Activated B cell treated with CpG ODN at 0.5 μM for 24 hours (primary cell): ENCODE measurements at regions of chr5 and their contacts with region 1.

Region 1: DNA sequence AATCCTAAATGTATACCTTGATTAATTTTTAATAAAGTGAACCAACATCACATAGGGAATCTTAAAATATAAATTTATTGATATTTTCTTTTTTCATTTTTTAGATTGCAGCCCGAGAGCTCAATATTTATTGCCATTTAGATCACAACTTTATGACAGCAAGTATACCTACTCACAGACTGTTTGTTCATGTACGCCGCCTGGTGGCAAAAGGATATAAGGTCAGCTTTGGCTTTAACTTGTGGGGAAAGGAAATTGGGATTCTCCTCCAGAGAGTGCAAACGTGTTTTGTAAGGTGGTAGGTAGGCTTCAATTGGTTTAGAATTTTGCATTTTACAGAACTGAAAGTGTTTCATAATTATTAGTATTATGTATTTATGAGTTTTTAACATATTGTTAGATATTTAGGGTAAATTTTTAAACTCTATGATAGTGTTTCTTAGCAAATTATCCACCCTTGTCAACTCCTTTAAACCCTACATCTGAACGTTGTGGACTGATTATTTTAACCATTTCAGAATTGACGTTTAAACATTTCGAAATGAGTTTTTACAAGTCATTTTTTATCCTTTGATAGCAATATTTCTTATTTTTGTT is 17.5 kb upstream of the DHFR start:
- DNase-seq: no peak
- ATAC-seq: no peak
- H3K4me3 Mint-ChIP-seq: no peak overlapping the region
- H3K27ac Mint-ChIP-seq: no peak overlapping the region
- H3K4me1 Mint-ChIP-seq: peaks cover 19% of the 10 kb centered on the region
- H3K27me3 Mint-ChIP-seq: no peaks in the 10 kb centered on the region
- CTCF ChIP-seq: peak; percentile 61

Region 2: GRCh38 chr5:80093796-80094195 is 578.4 kb before region 1 on chr5:
- CTCF ChIA-PET with region 1: interaction called, 11 read pairs
- POLR2A ChIA-PET with region 1: no interaction called
- intact Hi-C with region 1: loop called (anchors 1 kb)
- DNase-seq: no peak
- ATAC-seq: no peak
- H3K4me3 Mint-ChIP-seq: no peak overlapping the region
- H3K27ac Mint-ChIP-seq: no peak overlapping the region
- H3K4me1 Mint-ChIP-seq: no peaks in the 10 kb centered on the region
- H3K27me3 Mint-ChIP-seq: no peaks in the 10 kb centered on the region
- CTCF ChIP-seq: no peak

Region 3: DNA sequence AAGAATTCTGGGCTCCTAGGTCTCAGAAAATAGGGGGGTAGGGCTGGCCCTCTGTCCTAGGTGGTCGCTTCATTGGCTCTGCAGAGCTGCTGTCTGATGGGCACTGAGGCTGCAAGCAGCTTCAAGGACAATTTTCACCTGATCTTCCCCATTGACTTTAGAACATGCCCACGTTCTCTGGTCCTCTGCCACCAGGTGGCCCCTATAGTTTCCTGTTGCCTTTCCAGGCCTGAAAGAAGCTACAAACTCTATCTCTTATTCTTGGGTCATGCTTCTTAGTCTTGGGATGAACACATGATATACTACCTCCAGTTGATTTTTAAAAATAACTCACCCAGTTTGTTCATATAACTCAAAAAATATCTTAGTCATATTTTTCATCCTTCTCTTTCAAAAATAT is 326.2 kb before region 1 on chr5:
- CTCF ChIA-PET with region 1: interaction called, 13 read pairs
- POLR2A ChIA-PET with region 1: no interaction called
- intact Hi-C with region 1: loop called (anchors 1 kb)
- DNase-seq: no peak
- ATAC-seq: peak; percentile 57
- H3K4me3 Mint-ChIP-seq: no peak overlapping the region
- H3K27ac Mint-ChIP-seq: no peak overlapping the region
- H3K4me1 Mint-ChIP-seq: no peaks in the 10 kb centered on the region
- H3K27me3 Mint-ChIP-seq: no peaks in the 10 kb centered on the region
- CTCF ChIP-seq: no peak

Region 4: GRCh38 chr5:80481019-80481893 is 191.0 kb before region 1 on chr5:
- CTCF ChIA-PET with region 1: interaction called, 8 read pairs
- POLR2A ChIA-PET with region 1: no interaction called
- intact Hi-C with region 1: loop called (anchors 1 kb)
- DNase-seq: no peak
- ATAC-seq: peak; percentile 40
- H3K4me3 Mint-ChIP-seq: no peak overlapping the region
- H3K27ac Mint-ChIP-seq: no peak overlapping the region
- H3K4me1 Mint-ChIP-seq: no peaks in the 10 kb centered on the region
- H3K27me3 Mint-ChIP-seq: peaks cover 11% of the 10 kb centered on the region
- CTCF ChIP-seq: no peak